Psoas muscle (tissue), 8 donors: ENCODE measurements at regions of chr17 and their contacts with region 1.

Region 1: DNA sequence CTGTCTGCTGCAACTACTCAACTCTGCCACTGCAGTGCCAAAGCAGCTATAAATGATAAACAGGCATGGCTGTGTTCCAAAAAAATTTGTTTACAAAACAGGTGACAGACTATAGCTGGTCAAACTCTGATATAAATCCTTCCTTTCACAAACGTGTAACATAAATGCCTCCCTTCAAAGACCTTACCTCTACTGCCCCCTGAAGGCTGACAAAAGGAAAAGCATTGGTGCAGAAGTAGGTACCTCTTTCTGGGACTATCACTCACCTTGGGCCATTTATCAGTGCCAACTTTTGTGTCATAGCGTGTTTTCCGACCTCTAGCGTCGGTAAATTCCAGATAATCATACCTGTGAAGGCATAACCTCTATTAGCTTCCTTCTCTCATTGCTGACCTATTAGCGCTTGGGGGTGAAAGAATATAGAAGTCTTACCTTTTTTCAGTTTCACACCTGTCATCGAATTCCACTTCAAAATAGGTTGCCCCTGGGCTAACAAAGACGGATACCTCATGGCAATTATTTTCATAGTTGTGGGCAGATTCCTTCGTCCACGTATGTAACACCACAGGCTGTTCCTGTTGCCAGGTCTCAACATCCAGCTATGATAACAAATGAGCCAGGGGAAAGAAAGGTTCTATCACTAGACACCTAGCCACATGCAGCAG is 67.9 kb downstream of the ZZEF1 start:
- DNase-seq: no peak
- ATAC-seq: peak; percentile 47 to 54 (median 53)
- H3K4me3 ChIP-seq: no peak overlapping the region
- H3K27ac ChIP-seq: peak overlapping the region; percentile 94
- H3K4me1 ChIP-seq: peaks cover 27% of the 10 kb centered on the region
- H3K27me3 ChIP-seq: no peaks in the 10 kb centered on the region
- CTCF ChIP-seq: peak; percentile 64

Region 2: DNA sequence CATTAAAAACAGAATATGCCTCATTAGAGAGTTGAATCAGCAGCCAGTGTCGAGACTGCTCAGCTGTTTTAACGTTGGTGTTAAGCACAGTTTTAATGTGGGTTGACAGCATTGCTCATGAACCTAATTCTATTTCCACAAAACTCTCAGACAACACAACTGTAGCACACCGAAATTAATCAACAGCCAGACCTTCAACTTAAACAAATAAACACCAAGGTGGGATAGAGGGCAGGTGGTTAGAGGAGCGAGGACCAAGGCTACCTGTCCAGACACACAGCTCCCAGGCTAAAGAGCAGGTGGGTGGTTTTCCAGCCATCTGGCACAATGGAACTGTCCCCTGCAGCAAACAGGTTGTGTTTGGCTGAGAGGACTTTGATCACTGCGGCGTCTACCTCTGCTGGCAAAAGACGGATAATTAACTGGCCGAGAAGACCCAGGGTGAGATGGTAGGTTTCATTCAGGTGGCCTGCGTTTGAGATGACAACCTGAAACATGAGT is 41.2 kb before region 1 on chr17:
- intact Hi-C with region 1: loop called in 1 of 2 experiments (anchors 5 kb)
- DNase-seq: no peak
- ATAC-seq: no peak
- H3K4me3 ChIP-seq: no peak overlapping the region
- H3K27ac ChIP-seq: no peak overlapping the region
- H3K4me1 ChIP-seq: no peaks in the 10 kb centered on the region
- H3K27me3 ChIP-seq: no peaks in the 10 kb centered on the region
- CTCF ChIP-seq: no peak

Region 3: GRCh38 chr17:4293572-4293971 is 218.6 kb after region 1 on chr17:
- intact Hi-C with region 1: no loop called
- DNase-seq: no peak
- ATAC-seq: no peak
- H3K4me3 ChIP-seq: no peak overlapping the region
- H3K27ac ChIP-seq: peak overlapping the region; percentile 14
- H3K4me1 ChIP-seq: peaks cover 37% of the 10 kb centered on the region
- H3K27me3 ChIP-seq: no peaks in the 10 kb centered on the region
- CTCF ChIP-seq: no peak